Head of caudate nucleus (tissue), 42 donors: ENCODE measurements at regions of chr21 and their contacts with region 1.

Region 1: GRCh38 chr21:31659536-31660258 is at the start of gene SOD1:
- DNase-seq: peak; percentile 93 to 99 (median 98)

Region 2: DNA sequence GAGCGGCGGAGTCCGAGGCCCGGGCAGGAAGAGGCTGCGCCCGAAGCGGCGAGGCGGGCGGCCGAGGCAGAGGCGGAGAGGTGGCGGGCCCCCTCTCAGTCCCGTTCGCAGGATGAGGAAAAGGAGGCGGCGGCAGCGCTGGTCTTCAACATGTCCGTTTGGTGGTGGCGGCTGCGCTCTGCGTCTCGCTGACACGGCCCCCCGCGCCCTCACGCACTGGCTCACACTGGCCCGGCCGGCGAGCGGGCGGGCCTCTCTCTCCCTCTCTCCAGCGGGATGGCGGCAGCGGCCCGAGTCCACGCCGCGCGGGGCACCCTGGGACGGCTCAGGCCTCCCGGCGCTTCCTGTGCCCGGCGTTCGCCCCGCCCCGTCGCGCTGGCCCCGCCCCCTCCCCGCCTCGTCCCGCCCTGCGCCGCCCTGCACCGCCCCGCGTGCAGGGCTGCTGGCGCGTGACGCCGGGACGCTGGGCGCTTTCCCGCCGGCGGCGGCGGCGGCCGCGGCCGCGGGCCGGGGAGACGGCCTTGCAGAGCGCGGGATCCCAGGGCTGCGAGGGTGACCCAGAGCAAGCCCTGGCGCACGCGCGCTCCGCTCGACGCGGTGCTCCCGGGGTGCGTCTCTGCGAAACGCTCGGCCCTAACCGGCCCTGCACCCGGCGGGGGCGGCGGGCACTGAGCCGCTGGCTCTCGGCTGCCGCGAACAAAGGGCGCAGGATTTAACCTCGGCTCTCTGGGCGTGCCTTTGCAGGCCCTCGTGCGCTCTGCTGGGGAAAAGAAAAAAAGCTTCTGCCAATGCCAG is 72.3 kb after region 1 on chr21 and contains the start of gene SCAF4:
- intact Hi-C with region 1: loop called (anchors 2 kb)
- DNase-seq: peak; percentile 66 to 96 (median 92)

Region 3: DNA sequence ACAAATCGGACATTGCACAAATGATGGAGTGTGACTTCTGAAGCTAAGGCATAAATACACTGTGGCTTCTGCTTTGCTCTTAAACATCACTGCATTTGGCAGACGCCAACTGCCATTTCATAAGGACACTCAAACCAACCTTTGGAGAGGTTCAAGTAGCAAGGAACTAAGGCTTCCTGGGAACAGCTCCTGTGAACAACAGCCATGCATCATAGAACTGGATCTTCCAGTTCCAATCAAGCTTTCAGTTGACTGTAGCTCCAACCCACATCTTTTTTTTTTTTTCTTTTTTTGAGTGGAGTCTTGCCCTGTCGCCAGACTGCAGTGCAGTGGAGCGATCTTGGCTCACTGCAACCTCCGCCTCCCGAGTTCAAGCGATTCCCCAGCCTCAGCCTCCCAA is 202.4 kb after region 1 on chr21:
- intact Hi-C with region 1: no loop called
- DNase-seq: no peak

Region 4: GRCh38 chr21:31900121-31900895 is 240.6 kb after region 1 on chr21:
- intact Hi-C with region 1: no loop called
- DNase-seq: no peak

Region 5: DNA sequence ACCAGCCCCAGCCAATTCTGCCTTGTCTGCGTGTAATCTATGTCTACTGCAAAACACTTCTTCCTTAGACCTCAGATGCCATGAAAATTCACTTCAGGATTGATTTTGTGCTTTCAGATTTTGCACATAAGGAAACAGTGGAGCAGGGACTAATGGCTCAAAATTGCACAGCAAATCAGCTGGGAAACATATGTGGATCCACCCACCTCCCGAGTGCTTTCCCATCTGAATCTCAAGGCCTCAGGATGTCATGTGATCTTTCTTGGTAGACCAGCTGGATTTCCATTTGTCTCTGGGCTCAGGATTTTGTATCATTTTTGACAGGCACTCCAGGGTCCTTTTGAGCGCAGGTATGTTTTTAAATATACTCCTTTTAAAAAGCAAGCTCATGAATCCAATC is 460.5 kb after region 1 on chr21:
- intact Hi-C with region 1: no loop called
- DNase-seq: no peak